MCF 10A (cell line): ENCODE measurements at regions of chr20 and their contacts with region 1.

Region 1: DNA sequence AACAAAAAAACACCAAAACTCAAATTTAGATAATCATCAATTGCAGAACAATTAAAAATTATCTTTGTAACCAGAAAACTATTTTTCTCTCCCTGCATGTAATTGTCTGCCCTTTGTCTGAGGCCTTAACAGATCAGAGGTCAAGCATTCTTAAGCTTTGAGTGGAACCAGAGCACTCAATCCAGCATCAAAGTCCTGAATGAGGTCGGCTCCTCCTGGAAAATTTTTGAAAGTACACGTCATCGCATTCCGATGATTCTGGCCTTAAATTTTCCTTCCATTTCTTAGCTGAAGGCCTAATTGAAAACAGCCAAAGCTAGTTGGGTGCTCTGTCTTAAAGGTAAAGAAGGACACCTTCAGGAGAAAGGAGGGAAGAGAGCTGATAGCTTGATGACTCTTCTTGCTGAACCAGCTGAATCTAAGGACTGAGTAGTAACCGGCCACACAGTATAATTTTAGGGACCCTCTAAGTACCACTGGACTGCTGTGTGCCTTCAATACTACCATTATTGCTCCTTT is 510.2 kb upstream of the SULF2 start:
- DNase-seq: peak; percentile 81
- H3K4me3 Mint-ChIP-seq: no peak overlapping the region
- H3K27ac Mint-ChIP-seq: peak overlapping the region; percentile 39
- H3K4me1 Mint-ChIP-seq: peaks cover 41% of the 10 kb centered on the region
- H3K27me3 Mint-ChIP-seq: peaks cover 8% of the 10 kb centered on the region
- CTCF ChIP-seq: peak; percentile 57

Region 2: DNA sequence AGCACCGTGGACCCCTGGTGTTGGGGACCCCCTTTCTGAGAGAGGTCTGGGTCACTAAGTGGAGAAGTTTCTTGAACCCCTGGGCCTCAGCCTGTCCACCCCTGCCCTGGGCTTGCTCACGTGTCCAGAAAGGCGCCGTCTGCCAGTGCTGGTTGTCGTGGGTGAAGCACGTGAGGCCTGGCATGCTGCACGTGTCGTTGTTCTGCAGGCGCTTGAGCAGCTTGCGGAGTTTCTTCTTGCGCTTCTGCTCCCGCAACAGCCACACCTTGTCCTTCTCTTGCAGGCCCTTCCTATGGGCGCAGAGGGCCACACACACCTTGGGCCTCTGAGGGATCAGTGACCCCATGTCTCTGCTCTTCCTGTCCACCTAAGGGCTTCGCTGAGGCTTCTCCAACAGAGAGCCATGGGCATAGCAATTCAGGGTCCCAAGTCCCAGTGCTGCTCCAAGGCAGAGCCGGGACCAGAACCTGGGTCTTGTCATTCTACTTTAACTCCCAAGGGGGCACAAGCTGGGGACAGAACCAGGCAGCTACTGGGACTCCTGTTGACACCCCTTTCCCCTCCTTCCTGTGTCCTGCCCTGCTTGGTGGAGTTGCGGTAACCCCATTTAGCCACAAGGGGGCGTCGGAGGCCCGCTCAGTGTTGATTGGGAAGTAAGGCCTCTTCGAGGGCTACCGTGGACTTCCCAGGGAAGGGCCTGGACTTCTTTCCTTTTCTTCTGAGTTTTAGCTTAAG is 632.0 kb before region 1 on chr20:
- CTCF ChIA-PET with region 1: interaction called, 30 read pairs
- POLR2A ChIA-PET with region 1: interaction called, 3 read pairs
- intact Hi-C with region 1: loop called (anchors 5 kb)
- DNase-seq: peak; percentile 81
- H3K4me3 Mint-ChIP-seq: no peak overlapping the region
- H3K27ac Mint-ChIP-seq: peak overlapping the region; percentile 46
- H3K4me1 Mint-ChIP-seq: peaks cover 14% of the 10 kb centered on the region
- H3K27me3 Mint-ChIP-seq: no peaks in the 10 kb centered on the region
- CTCF ChIP-seq: peak; percentile 90

Region 3: DNA sequence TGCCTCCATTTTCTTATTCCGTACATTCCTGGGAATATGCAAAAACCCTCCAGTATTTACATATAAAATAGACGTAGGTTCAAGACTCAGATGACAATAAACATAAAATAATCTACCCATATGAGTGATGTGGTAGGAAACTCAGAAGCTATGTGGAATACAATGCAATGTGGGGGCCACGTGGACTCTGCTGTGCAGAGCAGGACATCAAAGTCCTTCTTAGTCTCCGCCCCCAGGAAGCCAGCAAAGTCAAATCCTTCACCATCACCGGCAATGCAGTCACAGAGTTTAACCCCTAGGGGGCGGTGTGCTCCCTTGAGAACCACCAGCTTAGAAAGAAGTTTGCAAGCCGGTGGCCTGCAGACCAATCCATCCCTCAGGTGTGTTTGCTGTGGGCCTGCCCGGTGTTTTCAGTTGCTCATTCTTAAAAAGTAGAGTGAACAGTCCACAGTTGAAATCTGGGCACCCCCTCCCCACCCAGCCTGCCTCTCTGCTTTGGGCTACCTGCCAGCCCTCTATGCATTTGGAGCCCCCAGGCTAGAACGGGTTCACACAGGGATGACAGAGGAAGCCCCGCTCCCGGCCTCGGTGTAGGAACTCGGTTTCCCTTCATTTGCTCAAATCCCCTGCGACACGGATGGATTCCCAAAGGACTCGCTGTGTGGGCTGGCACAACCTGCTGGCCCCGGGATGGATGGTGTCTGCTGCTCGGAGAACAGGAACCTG is 570.1 kb before region 1 on chr20:
- CTCF ChIA-PET with region 1: interaction called, 18 read pairs
- POLR2A ChIA-PET with region 1: interaction called, 6 read pairs
- intact Hi-C with region 1: loop called (anchors 1 kb)
- DNase-seq: peak; percentile 86
- H3K4me3 Mint-ChIP-seq: no peak overlapping the region
- H3K27ac Mint-ChIP-seq: no peak overlapping the region
- H3K4me1 Mint-ChIP-seq: no peaks in the 10 kb centered on the region
- H3K27me3 Mint-ChIP-seq: no peaks in the 10 kb centered on the region
- CTCF ChIP-seq: peak; percentile 94

Region 4: GRCh38 chr20:47854163-47854562 is 441.3 kb before region 1 on chr20:
- CTCF ChIA-PET with region 1: interaction called, 10 read pairs
- POLR2A ChIA-PET with region 1: interaction called, 5 read pairs
- intact Hi-C with region 1: loop called (anchors 1 kb)
- DNase-seq: no peak
- H3K4me3 Mint-ChIP-seq: no peak overlapping the region
- H3K27ac Mint-ChIP-seq: no peak overlapping the region
- H3K4me1 Mint-ChIP-seq: peaks cover 6% of the 10 kb centered on the region
- H3K27me3 Mint-ChIP-seq: no peaks in the 10 kb centered on the region
- CTCF ChIP-seq: no peak

Region 5: DNA sequence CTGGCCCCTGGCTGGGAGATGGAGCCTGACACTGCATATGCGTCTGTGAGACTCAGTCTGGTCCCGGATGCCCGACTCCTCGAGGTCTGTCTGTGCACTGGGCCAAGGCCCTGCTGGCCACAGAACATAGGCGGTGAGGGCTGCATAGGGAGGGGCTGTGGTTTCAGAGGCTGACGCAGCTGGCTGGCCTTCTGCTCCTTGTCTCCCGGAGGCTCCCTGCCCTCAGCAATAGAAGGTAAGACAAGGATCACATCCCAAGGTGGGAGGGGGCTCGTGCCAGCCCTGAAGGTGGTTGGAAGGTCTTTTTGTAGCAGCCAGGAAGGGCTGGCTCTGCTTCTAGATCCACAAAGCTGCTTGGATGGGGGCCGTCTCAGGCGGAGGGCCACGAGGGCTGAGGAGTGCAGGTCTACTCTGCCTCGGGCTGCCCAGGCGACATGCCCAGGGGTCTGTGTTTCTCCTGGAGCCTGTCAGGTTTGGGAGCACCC is 270.4 kb before region 1 on chr20:
- CTCF ChIA-PET with region 1: no interaction called
- POLR2A ChIA-PET with region 1: no interaction called
- intact Hi-C with region 1: loop called (anchors 2 kb)
- DNase-seq: peak; percentile 84
- H3K4me3 Mint-ChIP-seq: peak overlapping the region; percentile 78
- H3K27ac Mint-ChIP-seq: peak overlapping the region; percentile 96
- H3K4me1 Mint-ChIP-seq: peaks cover 29% of the 10 kb centered on the region
- H3K27me3 Mint-ChIP-seq: no peaks in the 10 kb centered on the region
- CTCF ChIP-seq: no peak

Region 6: GRCh38 chr20:48283305-48284080 is 12.0 kb before region 1 on chr20:
- CTCF ChIA-PET with region 1: interaction called, 10 read pairs
- POLR2A ChIA-PET with region 1: interaction called, 5 read pairs
- intact Hi-C with region 1: no loop called
- DNase-seq: peak; percentile 90
- H3K4me3 Mint-ChIP-seq: no peak overlapping the region
- H3K27ac Mint-ChIP-seq: peak overlapping the region; percentile 20
- H3K4me1 Mint-ChIP-seq: peaks cover 13% of the 10 kb centered on the region
- H3K27me3 Mint-ChIP-seq: no peaks in the 10 kb centered on the region
- CTCF ChIP-seq: no peak